ENCODE measurements at regions of chr1 and their contacts with region 1.

Region 1: GRCh38 chr1:175154629-175155472 is 37.7 kb downstream of the KIAA0040 start:
- DNase-seq: peak; percentile 82
- H3K4me3 Mint-ChIP-seq: no peak overlapping the region
- H3K27ac Mint-ChIP-seq: no peak overlapping the region
- H3K4me1 Mint-ChIP-seq: peaks cover 17% of the 10 kb centered on the region
- H3K27me3 Mint-ChIP-seq: peaks cover 41% of the 10 kb centered on the region
- CTCF ChIP-seq: peak; percentile 95

Region 2: DNA sequence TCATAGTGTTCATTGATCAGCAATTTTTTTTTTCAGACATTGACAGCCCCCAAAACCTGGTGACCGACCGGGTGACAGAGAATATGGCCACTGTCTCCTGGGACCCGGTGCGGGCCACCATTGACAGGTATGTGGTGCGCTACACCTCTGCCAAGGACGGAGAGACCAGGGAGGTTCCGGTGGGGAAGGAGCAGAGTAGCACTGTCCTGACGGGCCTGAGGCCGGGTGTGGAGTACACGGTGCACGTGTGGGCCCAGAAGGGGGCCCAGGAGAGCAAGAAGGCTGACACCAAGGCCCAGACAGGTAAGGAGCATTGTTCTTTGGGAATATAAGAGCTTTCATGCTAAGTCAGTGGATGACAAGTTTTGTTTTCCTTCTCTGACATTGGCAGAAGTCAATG is 37.9 kb before region 1 on chr1:
- CTCF ChIA-PET with region 1: interaction called, 17 read pairs
- POLR2A ChIA-PET with region 1: no interaction called
- intact Hi-C with region 1: no loop called
- DNase-seq: no peak
- H3K4me3 Mint-ChIP-seq: no peak overlapping the region
- H3K27ac Mint-ChIP-seq: no peak overlapping the region
- H3K4me1 Mint-ChIP-seq: no peaks in the 10 kb centered on the region
- H3K27me3 Mint-ChIP-seq: no peaks in the 10 kb centered on the region
- CTCF ChIP-seq: no peak

Region 3: GRCh38 chr1:175174309-175175165 is 19.7 kb after region 1 on chr1:
- CTCF ChIA-PET with region 1: interaction called, 415 read pairs
- POLR2A ChIA-PET with region 1: interaction called, 5 read pairs
- intact Hi-C with region 1: no loop called
- DNase-seq: no peak
- H3K4me3 Mint-ChIP-seq: no peak overlapping the region
- H3K27ac Mint-ChIP-seq: peak overlapping the region; percentile 39
- H3K4me1 Mint-ChIP-seq: peaks cover 24% of the 10 kb centered on the region
- H3K27me3 Mint-ChIP-seq: no peaks in the 10 kb centered on the region
- CTCF ChIP-seq: no peak

Region 4: GRCh38 chr1:175208773-175209492 is 54.1 kb after region 1 on chr1:
- CTCF ChIA-PET with region 1: interaction called, 74 read pairs
- POLR2A ChIA-PET with region 1: interaction called, 3 read pairs
- intact Hi-C with region 1: no loop called
- DNase-seq: no peak
- H3K4me3 Mint-ChIP-seq: no peak overlapping the region
- H3K27ac Mint-ChIP-seq: no peak overlapping the region
- H3K4me1 Mint-ChIP-seq: peaks cover 14% of the 10 kb centered on the region
- H3K27me3 Mint-ChIP-seq: no peaks in the 10 kb centered on the region
- CTCF ChIP-seq: no peak

Region 5: GRCh38 chr1:175267716-175268384 is 113.0 kb after region 1 on chr1:
- CTCF ChIA-PET with region 1: interaction called, 16 read pairs
- POLR2A ChIA-PET with region 1: no interaction called
- intact Hi-C with region 1: no loop called
- DNase-seq: no peak
- H3K4me3 Mint-ChIP-seq: no peak overlapping the region
- H3K27ac Mint-ChIP-seq: no peak overlapping the region
- H3K4me1 Mint-ChIP-seq: peaks cover 2% of the 10 kb centered on the region
- H3K27me3 Mint-ChIP-seq: no peaks in the 10 kb centered on the region
- CTCF ChIP-seq: no peak

Region 6: DNA sequence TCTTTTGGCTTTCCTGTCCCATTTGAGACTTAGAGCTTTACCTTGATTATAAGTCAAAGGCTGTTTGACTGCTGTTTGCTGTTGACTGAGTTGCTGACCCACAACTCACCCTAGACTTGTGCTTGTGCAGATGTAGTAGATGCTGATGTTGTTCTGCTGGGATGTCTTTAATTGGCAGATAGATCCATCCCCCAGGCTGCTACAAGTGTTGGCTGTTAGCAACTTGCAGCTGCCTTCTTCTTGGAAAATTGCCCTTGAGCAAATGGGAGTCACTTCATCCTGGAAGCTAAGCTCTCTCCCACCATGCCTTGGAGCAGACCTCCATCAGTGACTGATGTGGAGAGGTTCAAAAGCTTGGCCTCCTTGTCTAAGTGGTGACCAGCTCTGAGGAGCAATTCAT is 177.0 kb after region 1 on chr1:
- CTCF ChIA-PET with region 1: interaction called, 723 read pairs
- POLR2A ChIA-PET with region 1: no interaction called
- intact Hi-C with region 1: no loop called
- DNase-seq: no peak
- H3K4me3 Mint-ChIP-seq: no peak overlapping the region
- H3K27ac Mint-ChIP-seq: no peak overlapping the region
- H3K4me1 Mint-ChIP-seq: no peaks in the 10 kb centered on the region
- H3K27me3 Mint-ChIP-seq: peaks cover 34% of the 10 kb centered on the region
- CTCF ChIP-seq: no peak

Region 7: DNA sequence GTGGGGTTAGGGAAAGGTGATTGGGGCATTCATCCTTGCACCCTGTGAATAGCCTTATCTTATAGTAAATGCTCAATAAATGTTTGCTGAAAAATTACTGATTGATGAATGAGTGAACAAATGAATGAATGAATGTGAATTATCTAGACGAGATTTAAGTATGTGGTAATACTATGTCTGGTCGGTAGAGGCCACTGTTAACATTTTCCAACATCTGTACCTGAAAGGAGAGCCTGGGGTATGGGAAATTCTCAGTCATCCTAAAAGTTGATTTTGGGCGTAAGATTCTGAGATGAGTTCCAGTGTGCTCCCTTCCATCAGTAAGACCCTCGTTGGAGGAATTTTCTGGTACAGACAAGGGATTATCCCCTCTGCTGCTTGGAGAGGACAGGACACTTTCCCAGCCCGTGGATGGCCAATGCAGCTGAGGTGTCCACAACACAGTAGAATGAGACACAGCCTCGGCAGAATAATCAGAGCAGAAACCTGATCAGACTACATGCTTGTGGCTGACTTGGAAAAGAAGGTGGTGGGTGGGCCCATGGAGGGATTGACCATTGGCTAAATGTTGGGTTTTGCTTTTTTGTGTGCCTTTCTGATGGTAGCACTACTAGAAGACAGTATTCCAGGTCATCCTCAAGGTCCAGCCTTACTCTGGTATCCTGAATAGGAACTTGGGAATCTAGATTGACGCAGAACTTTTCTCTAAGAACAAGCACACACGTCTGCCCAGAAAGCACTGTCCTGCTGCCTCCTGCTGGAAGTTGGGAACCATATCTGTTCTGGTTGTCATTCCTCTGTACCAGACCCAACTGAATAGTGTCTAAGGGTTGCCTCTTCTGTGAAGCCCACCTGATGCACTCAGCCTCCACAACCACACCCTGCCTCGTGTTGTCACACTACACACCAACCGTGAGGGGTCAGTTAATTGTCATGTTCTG is 326.5 kb after region 1 on chr1:
- CTCF ChIA-PET with region 1: interaction called, 5 read pairs
- POLR2A ChIA-PET with region 1: no interaction called
- intact Hi-C with region 1: loop called (anchors 5 kb)
- DNase-seq: peak; percentile 54
- H3K4me3 Mint-ChIP-seq: no peak overlapping the region
- H3K27ac Mint-ChIP-seq: no peak overlapping the region
- H3K4me1 Mint-ChIP-seq: no peaks in the 10 kb centered on the region
- H3K27me3 Mint-ChIP-seq: peaks cover 87% of the 10 kb centered on the region
- CTCF ChIP-seq: peak; percentile 73

Measured in MCF 10A (cell line).